Spleen (tissue), 13 donors: ENCODE measurements at regions of chr14 and their contacts with region 1.

Region 1: GRCh38 chr14:77616454-77617229 is at the start of gene SPTLC2:
- DNase-seq: peak; percentile 100
- H3K4me3 ChIP-seq: peak within 1 kb of the TSS; percentile 88 to 99 (median 96)
- H3K27ac ChIP-seq: peak within 1 kb of the TSS; percentile 81 to 97 (median 92)
- H3K4me1 ChIP-seq: peaks cover 10 to 63% (median 44%) of the 10 kb centered on the region in 6 donors
- H3K27me3 ChIP-seq: no peaks in the 10 kb centered on the region
- CTCF ChIP-seq: peak in 3 of 11 experiments; percentile 14 to 49 (median 21)
- POLR2A ChIP-seq: peak; percentile 59 to 85 (median 67)
- total RNA-seq, gene SPTLC2: 62.0 to 103 (median 79.7) TPM

Region 2: DNA sequence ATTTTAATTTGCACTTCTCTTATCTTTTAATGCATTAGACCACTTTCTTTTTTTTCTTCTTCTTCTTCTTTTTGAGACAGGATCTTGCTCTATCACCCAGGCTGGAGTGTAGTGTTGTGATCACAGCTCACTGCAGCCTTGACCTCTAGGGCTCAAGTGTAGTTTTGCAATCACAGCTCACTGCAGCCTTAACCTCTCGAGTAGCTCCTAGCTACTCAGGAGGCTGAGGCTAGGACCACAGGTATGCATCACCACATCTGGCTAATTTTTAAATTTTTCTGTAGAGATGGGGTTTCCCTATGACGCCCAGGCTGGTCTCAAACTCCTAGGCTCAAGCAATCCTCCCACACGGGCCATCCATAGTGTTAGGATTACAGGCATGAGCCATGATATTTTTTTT is 252.5 kb before region 1 on chr14:
- intact Hi-C with region 1: no loop called
- DNase-seq: no peak
- H3K4me3 ChIP-seq: no peak overlapping the region
- H3K27ac ChIP-seq: no peak overlapping the region
- H3K4me1 ChIP-seq: peaks cover 0 to 50% (median 3%) of the 10 kb centered on the region in 6 donors
- H3K27me3 ChIP-seq: no peaks in the 10 kb centered on the region
- CTCF ChIP-seq: no peak
- POLR2A ChIP-seq: no peak

Region 3: GRCh38 chr14:77508249-77508648 is 108.4 kb before region 1 on chr14:
- intact Hi-C with region 1: no loop called
- DNase-seq: no peak
- H3K4me3 ChIP-seq: no peak overlapping the region
- H3K27ac ChIP-seq: peak overlapping the region in 2 of 8 donors; percentile 23 to 59
- H3K4me1 ChIP-seq: no peaks in the 10 kb centered on the region
- H3K27me3 ChIP-seq: no peaks in the 10 kb centered on the region
- CTCF ChIP-seq: no peak
- POLR2A ChIP-seq: no peak

Region 4: GRCh38 chr14:77554207-77554606 is 62.4 kb before region 1 on chr14:
- intact Hi-C with region 1: loop called (anchors 10 kb)
- DNase-seq: no peak
- H3K4me3 ChIP-seq: peak overlapping the region in 2 of 8 donors; percentile 3 to 11
- H3K27ac ChIP-seq: peak overlapping the region; percentile 10 to 83 (median 72)
- H3K4me1 ChIP-seq: peaks cover 0 to 36% (median 20%) of the 10 kb centered on the region in 6 donors
- H3K27me3 ChIP-seq: no peaks in the 10 kb centered on the region
- CTCF ChIP-seq: no peak
- POLR2A ChIP-seq: no peak